ENCODE measurements at regions of chr14 and their contacts with region 1.

Region 1: DNA sequence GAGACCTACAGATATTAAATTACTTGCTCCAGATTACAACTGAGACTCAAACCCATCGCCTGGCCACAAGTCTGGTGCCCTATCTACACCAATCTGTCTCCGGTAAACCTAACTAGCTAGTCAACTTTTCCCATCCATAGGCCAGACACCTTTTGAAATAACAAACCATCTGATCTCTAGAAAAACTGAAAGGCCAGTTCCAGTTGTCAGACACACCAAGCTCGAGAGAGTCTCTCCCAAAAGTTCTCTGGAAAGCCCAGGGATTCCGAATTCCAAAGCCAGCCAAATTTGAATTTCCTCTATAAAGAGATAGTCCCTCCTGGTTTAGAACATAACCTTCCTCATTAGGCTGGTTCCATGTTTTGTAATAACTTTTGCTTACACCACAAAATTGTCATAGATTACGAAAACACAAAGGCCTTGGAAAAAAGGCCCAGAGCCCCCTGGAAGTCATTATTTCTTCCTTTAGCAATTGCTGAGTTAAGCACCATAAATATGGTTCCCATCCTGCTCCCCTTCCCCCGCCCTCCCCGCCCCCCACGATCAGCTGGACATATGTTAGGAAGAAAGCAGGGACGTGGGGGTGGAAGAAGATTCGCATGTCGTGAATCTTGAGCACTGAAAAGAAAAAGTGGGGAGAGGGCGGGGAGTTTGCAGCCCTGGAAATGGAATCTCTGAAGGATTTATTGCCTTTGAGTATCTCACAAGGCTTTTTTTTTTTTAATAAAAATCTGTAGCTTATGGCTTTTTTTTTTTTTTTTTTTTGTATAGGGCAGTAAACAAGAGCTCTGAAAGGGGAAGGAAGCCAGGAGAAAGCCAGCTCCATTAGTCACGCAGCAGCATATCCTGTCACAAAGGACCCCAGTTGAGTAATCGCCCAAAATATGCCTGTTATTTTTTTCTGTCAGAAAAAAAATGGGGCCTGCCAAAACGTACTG is 110.4 kb downstream of the ZFP36L1 start:
- DNase-seq: peak; percentile 98
- H3K4me3 ChIP-seq: no peak overlapping the region
- H3K27ac ChIP-seq: peak overlapping the region; percentile 99
- H3K4me1 ChIP-seq: peaks cover 51% of the 10 kb centered on the region
- H3K27me3 ChIP-seq: no peaks in the 10 kb centered on the region
- CTCF ChIP-seq: no peak

Region 2: DNA sequence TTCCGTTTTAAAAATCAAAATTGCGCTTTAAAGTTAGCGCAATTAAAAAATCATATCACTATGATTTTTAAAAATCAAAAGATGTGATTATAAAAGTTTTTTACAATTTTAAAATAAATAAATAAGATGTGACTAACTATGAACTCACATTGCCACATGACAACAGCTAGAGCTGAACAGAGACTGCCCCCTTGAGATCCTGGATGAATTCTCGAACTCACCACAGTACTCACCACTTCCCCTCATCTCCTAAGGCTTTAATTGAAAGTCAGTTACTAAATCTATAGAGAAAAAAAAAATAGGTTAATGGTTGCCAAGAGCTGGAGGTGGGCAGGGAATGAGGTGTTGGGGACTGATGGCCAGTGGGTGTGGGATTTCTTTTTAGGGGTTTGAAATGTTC is 273.8 kb before region 1 on chr14:
- CTCF ChIA-PET with region 1: no interaction called
- POLR2A ChIA-PET with region 1: interaction called, 16 read pairs
- intact Hi-C with region 1: no loop called
- DNase-seq: peak; percentile 12
- H3K4me3 ChIP-seq: no peak overlapping the region
- H3K27ac ChIP-seq: no peak overlapping the region
- H3K4me1 ChIP-seq: no peaks in the 10 kb centered on the region
- H3K27me3 ChIP-seq: no peaks in the 10 kb centered on the region
- CTCF ChIP-seq: peak; percentile 36; the same call in 1 of the 2 replicates

Region 3: DNA sequence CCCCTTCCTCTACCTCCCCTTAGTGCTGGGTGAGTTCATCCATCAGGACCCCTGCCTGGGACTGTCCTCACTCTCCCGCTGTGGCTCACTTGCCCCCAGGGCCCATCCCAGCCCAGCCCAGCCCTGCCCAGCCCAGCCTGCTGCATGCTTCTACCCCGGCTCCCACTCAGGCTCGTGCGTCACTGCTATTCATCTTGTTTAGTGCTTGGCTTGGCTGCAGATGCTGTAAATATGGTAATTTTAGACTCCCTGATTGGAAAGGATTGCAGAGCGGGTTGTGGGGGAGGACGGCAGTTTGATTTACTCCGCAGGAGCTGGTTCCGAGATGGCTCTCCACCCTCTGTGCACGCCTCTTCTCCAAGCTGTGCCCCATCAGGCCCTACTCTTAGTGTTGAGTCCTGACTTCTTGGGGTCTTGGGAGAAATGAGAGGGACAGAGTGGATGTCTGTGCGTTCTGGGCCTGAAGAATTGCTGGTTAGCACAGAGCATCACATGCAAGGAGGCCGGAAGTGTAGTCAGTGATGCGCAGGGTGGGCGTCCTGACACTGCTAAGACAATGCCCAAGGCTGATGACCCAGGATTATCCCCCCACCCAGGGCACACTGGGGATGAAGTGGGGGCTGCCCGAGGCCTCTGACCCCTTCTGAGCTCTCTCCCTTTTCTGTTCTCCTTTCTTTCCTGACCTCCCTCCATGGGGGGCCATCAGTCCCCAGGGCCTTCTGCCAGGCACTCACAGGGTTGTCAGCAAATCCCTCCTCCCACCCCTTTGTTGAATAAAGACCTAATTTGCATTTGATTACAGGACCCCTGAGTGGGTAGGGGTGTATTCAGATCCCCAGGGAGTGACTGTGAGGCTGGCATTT is 134.0 kb before region 1 on chr14:
- CTCF ChIA-PET with region 1: no interaction called
- POLR2A ChIA-PET with region 1: no interaction called
- intact Hi-C with region 1: loop called (anchors 2 kb)
- DNase-seq: peak; percentile 97
- H3K4me3 ChIP-seq: no peak overlapping the region
- H3K27ac ChIP-seq: peak overlapping the region; percentile 95
- H3K4me1 ChIP-seq: peaks cover 62% of the 10 kb centered on the region
- H3K27me3 ChIP-seq: no peaks in the 10 kb centered on the region
- CTCF ChIP-seq: no peak

Region 4: GRCh38 chr14:68970038-68970612 is 287.7 kb after region 1 on chr14:
- CTCF ChIA-PET with region 1: no interaction called
- POLR2A ChIA-PET with region 1: no interaction called
- intact Hi-C with region 1: no loop called
- DNase-seq: no peak
- H3K4me3 ChIP-seq: no peak overlapping the region
- H3K27ac ChIP-seq: peak overlapping the region; percentile 58
- H3K4me1 ChIP-seq: peaks cover 18% of the 10 kb centered on the region
- H3K27me3 ChIP-seq: no peaks in the 10 kb centered on the region
- CTCF ChIP-seq: no peak